ENCODE measurements at regions of chr6 and their contacts with region 1.

Region 1: GRCh38 chr6:158718461-158719046 is 68.7 kb downstream of the SYTL3 start:
- DNase-seq: no peak
- ATAC-seq: no peak
- H3K4me3 Mint-ChIP-seq: no peak overlapping the region
- H3K27ac Mint-ChIP-seq: peak overlapping the region; percentile 94
- H3K4me1 Mint-ChIP-seq: peaks cover 72% of the 10 kb centered on the region
- H3K27me3 Mint-ChIP-seq: no peaks in the 10 kb centered on the region

Region 2: DNA sequence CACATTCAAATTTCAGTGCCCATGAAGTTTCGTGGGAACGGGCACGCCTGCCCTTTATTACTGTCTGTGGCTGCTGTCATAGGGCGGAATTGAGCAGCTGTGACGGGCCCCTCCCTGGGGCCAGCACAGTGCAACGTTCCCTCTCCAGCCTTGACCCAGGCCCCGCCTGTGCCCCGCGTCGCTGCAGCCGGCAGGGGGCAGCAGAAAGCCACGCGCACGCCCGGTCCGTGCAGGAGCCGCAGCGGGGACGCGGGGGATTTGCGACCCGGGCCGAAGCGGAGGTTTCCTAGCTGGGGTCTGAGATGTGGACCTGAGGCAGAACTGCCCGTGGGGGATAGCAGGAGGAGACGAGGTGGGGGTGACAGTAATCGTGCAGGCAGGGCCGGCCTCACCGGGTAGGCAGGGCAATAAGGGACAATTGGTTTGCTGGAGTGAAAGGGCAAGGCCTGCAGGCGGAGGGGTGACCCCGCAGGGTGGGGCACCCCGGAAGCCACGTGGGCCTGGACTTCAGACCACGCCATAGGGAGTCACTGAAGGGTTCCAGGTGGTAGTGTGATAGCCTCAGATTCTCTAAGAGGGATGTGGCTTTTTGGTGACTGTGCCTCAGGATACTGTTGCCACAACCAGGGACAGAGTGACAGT is 14.3 kb before region 1 on chr6:
- CTCF ChIA-PET with region 1: interaction called, 16 read pairs
- POLR2A ChIA-PET with region 1: interaction called, 3 read pairs
- DNase-seq: peak; percentile 79
- ATAC-seq: peak; percentile 98
- H3K4me3 Mint-ChIP-seq: peak overlapping the region; percentile 60
- H3K27ac Mint-ChIP-seq: peak overlapping the region; percentile 82
- H3K4me1 Mint-ChIP-seq: peaks cover 32% of the 10 kb centered on the region
- H3K27me3 Mint-ChIP-seq: no peaks in the 10 kb centered on the region

Measured in activated CD8-positive, alpha-beta T cell treated with anti-CD3 and anti-CD28 coated beads, Interleukin-2, amount 10 ng/mL, durations not matched to agents 7 days and 5 days (primary cell).